ENCODE measurements at regions of chr9 and their contacts with region 1.

Region 1: DNA sequence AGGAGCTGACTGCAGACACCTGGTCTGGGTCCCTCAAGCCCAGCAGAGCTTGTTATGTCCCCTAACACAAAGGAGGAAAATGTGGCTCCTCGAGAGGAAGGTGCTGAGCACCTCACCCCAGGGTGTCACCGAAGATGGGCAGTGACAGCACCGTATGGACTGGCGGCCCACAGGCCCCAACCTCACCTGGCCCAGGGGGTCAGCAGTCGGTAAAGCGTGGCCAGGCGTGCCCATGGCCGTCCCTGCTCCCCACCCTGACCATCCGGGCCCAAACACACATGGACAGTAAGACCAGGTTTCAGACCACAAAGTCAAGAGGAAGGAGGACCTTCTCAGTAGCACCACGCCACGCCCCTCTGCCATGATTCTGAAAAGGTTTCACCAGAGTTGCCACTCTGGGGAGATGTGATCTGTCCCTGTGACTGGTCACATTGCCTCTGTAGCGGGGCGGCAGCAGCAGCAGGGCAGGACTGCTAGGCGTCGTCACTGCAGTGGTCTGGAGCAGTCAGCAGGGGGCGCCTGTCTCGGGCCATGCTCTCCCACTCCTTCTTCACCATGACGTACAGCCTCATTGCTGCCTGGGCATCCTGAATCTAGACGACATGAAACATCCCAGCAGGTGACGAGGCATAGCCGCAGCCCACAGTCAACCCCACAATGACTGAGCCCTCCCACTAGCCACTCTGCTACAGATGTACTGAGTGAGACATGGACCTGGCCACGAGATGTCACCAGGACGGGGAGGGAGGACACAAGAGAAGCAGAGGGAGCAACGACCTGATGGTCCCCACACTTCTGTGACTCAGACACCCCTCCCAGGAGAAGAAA is 11.1 kb downstream of the REXO4 start:
- DNase-seq: peak; percentile 47
- ATAC-seq: peak; percentile 85
- H3K4me3 ChIP-seq: no peak overlapping the region
- H3K27ac ChIP-seq: no peak overlapping the region
- H3K4me1 ChIP-seq: peaks cover 0 to 5% of the 10 kb centered on the region in 2 experiments; a peak in 1 of 4 replicates
- H3K27me3 ChIP-seq: no peaks in the 10 kb centered on the region
- CTCF ChIP-seq: peak; percentile 81 to 96 (median 93)
- POLR2A ChIP-seq: no peak
- RAD21 ChIP-seq: peak; percentile 67

Region 2: GRCh38 chr9:133356391-133357091 is 50.2 kb before region 1 on chr9 and contains the starts of genes SURF1 and SURF2:
- CTCF ChIA-PET with region 1: interaction called, 3 read pairs
- POLR2A ChIA-PET with region 1: no interaction called
- RAD21 ChIA-PET with region 1: interaction called in 1 of 2 experiments, 4 read pairs
- intact Hi-C with region 1: loop called (anchors 1 kb)
- DNase-seq: no peak
- ATAC-seq: peak; percentile 78
- H3K4me3 ChIP-seq: peak within 1 kb of the TSS; percentile 87 to 96
- H3K27ac ChIP-seq: peak within 1 kb of the TSS; percentile 61
- H3K4me1 ChIP-seq: peaks cover 7 to 24% of the 10 kb centered on the region in 2 experiments; a peak in 3 of 4 replicates
- H3K27me3 ChIP-seq: no peaks in the 10 kb centered on the region
- CTCF ChIP-seq: peak in 2 of 3 experiments; percentile 11 to 19; a peak in 1 of 6 replicates
- POLR2A ChIP-seq: peak; percentile 94
- RAD21 ChIP-seq: no peak
- total RNA-seq, gene SURF1: 71.7 TPM
- total RNA-seq, gene SURF2: 27.8 TPM

Measured in HCT116 (cell line).